ENCODE measurements at regions of chr6 and their contacts with region 1.

Region 1: DNA sequence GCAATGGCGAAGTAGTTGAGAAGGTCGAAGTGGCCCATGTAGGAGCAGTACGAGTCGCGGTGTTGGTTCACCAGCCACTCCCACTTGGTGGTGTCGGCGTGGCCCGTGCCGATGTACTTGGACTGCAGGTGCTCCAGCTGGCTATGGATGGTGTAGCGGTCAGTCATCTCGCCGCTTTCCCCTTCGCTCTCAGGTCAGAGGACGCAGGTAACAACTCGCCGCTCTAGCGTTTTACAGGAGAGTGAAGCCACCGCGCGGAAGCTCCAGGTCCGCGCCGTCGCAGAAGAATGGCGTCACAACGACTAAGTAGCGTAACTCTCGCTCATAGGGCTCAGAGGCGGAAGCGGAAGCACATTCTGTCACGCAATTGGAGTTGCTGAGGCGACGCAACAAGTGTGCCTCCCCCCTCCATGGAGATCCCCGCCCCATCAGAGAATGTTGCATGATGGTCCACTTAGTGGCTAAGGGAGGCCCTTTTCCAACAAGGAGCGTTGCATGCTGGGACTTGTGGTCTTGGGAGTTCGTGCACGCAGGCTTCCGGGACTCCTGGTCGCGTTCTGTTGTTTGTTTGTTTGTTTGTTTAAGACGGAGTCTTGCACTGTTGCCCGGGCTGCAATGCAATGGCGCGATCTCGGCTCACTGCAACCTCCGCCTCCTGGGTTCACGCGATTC is at the start of gene SF3B5:
- DNase-seq: peak; percentile 99
- ATAC-seq: peak; percentile 97
- H3K4me3 Mint-ChIP-seq: peak within 1 kb of the TSS; percentile 96
- H3K27ac Mint-ChIP-seq: peak within 1 kb of the TSS; percentile 99
- H3K4me1 Mint-ChIP-seq: peaks cover 33% of the 10 kb centered on the region
- H3K27me3 Mint-ChIP-seq: no peaks in the 10 kb centered on the region
- total RNA-seq, gene SF3B5: 167 to 168 TPM

Region 2: GRCh38 chr6:144055121-144055931 is 40.1 kb before region 1 on chr6:
- CTCF ChIA-PET with region 1: interaction called, 3 read pairs
- POLR2A ChIA-PET with region 1: interaction called, 17 read pairs
- DNase-seq: peak; percentile 78
- ATAC-seq: peak; percentile 95
- H3K4me3 Mint-ChIP-seq: peak overlapping the region; percentile 84
- H3K27ac Mint-ChIP-seq: peak overlapping the region; percentile 98
- H3K4me1 Mint-ChIP-seq: peaks cover 36% of the 10 kb centered on the region
- H3K27me3 Mint-ChIP-seq: no peaks in the 10 kb centered on the region

Region 3: DNA sequence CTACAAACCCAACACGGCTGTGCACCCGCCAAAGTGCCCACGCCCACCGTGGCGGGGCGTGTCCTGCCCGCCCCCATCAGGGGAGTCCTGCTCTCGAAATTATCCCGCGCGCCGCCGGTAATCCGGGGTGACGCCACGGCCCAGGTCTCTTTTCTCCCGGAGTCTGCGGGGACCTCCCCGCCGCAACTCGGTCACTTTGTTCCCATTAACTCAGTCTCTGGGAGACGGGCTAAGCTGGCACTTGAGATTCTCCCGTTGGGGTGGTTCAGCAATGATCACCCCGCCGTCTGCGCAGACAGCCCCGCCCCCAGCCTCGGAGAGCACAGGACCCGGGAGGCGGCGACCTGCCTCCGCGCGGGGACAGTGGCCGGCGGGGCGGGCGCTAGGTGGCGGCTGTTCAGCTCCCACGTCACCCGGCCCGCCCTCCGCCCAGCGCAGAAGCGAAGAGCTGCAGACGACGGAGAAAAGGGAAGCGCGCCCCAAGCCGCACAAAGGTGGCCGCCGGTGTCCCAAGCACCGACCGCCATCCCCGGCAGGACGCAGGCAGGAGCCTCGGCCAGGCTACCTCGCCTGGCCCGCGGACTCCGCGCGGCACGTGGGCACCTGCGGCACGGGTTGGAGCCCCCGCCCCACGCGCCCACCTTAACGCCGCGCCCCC is 31.6 kb before region 1 on chr6:
- CTCF ChIA-PET with region 1: interaction called, 8 read pairs
- POLR2A ChIA-PET with region 1: interaction called, 36 read pairs
- DNase-seq: peak; percentile 94
- ATAC-seq: peak; percentile 96
- H3K4me3 Mint-ChIP-seq: peak overlapping the region; percentile 88
- H3K27ac Mint-ChIP-seq: peak overlapping the region; percentile 94
- H3K4me1 Mint-ChIP-seq: peaks cover 46% of the 10 kb centered on the region
- H3K27me3 Mint-ChIP-seq: peaks cover 3% of the 10 kb centered on the region

Region 4: DNA sequence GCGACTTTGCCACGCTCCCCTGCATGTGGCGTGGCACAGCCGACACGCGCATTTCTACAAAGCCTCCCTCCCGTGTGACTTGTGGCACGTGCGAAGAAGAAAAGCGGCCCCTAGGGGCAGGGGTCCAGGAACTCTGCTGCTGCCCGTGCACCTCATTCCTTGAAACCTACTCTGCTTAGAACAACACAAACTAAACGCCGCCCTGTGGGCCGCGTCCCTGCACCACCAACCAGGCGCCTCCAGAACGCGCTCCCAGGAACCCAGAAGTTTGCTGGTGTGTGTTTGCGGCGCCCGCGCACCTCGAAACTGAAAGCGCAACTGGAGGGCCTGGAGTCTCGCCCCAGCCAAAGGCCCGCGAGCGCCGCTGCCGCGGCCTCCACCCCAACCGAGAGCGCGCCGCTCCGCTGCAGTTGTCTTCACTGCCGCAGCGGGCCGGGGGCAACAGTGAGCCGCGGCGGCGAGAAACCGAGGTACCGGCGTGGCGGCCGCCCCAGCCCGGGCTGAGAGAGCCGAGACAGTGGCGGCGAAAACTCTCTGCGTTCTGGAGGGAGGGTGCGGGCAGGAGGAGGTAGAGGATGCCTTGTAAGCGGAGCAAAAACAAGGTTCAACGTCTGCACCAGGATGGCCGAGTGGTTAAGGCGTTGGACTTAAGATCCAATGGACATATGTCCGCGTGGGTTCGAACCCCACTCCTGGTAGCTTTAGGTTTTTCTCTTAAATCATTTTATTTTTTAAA is 120.6 kb after region 1 on chr6:
- CTCF ChIA-PET with region 1: interaction called, 36 read pairs
- POLR2A ChIA-PET with region 1: no interaction called
- DNase-seq: peak; percentile 94
- ATAC-seq: peak; percentile 95
- H3K4me3 Mint-ChIP-seq: peak overlapping the region; percentile 87
- H3K27ac Mint-ChIP-seq: peak overlapping the region; percentile 98
- H3K4me1 Mint-ChIP-seq: peaks cover 32% of the 10 kb centered on the region
- H3K27me3 Mint-ChIP-seq: peaks cover 4% of the 10 kb centered on the region

Measured in activated CD8-positive, alpha-beta T cell treated with anti-CD3 and anti-CD28 coated beads, Interleukin-2, amount 10 ng/mL, durations not matched to agents 7 days and 5 days (primary cell).